Breast epithelium (tissue), 4 donors: ENCODE measurements at regions of chr6 and their contacts with region 1.

Region 1: DNA sequence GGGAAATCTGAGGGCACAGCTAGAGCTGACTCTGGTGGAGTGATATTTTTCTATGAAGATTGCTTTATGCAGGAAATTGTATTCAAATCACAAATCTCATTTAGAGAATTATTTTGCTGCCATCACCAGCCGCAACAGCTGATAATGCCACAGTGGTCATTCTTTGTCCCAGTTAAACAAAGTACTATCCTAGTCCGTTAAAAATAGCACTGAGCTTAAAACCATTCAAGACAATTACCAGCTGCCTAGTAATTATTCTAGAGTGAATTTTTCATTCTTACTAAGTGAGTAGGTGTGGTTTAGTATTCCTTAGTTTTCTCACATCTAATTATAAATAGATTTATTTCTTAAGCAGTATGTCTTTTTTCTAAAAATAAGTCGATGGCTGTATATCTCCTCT is 190.5 kb downstream of the SLC35F1 start:
- DNase-seq: no peak
- H3K4me3 ChIP-seq: no peak overlapping the region
- H3K27ac ChIP-seq: no peak overlapping the region
- H3K4me1 ChIP-seq: no peaks in the 10 kb centered on the region
- H3K27me3 ChIP-seq: no peaks in the 10 kb centered on the region
- CTCF ChIP-seq: no peak
- POLR2A ChIP-seq: no peak

Region 2: DNA sequence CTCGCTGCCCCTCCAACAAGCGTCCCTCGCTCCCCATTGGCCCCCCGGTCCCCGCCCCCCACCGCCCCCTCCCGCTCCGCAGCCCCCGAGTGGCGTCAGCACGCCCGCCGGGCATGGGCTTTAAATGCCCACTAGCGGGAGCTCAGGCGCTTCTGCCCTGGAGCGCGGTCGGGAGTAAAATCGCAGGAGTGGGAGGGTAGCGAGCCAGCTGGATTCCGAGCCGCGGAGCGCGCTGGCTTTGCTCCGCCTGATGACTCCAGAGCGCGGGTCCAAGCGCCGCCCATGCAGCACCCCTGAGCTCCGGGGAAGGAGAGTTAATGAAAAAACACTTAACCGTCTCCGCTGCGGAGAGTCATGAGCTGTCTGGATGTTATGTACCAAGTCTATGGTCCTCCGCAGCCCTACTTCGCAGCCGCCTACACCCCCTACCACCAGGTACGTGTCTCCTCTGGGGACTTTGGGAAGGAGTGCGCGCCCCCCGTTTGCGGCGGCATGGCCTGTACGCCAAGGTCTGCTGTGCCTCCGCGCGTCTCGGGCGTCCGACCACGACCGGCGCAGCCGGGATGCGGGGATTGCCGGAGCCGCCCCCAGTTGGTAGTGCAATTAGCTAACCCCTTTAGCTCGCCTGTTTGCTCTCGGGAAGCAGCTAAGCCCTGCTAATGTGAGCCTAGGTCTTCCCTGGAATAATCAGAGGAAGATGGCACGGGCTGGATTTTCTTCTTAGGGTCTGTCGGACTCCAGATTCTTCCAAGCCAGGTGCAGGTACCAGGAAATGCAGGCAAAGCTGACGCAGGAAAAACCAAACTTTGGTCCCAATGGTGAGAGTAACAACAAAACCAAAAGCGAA is 831.9 kb before region 1 on chr6 and contains the start of gene VGLL2:
- intact Hi-C with region 1: loop called (anchors 5 kb)
- DNase-seq: no peak
- H3K4me3 ChIP-seq: peak within 1 kb of the TSS; percentile 26 to 69 (median 45)
- H3K27ac ChIP-seq: no peak within 1 kb of the TSS
- H3K4me1 ChIP-seq: peaks cover 3 to 5% of the 10 kb centered on the region in 2 donors
- H3K27me3 ChIP-seq: peaks cover 0 to 94% of the 10 kb centered on the region in 2 donors
- CTCF ChIP-seq: no peak
- POLR2A ChIP-seq: no peak
- total RNA-seq, gene VGLL2: not detected

Region 3: DNA sequence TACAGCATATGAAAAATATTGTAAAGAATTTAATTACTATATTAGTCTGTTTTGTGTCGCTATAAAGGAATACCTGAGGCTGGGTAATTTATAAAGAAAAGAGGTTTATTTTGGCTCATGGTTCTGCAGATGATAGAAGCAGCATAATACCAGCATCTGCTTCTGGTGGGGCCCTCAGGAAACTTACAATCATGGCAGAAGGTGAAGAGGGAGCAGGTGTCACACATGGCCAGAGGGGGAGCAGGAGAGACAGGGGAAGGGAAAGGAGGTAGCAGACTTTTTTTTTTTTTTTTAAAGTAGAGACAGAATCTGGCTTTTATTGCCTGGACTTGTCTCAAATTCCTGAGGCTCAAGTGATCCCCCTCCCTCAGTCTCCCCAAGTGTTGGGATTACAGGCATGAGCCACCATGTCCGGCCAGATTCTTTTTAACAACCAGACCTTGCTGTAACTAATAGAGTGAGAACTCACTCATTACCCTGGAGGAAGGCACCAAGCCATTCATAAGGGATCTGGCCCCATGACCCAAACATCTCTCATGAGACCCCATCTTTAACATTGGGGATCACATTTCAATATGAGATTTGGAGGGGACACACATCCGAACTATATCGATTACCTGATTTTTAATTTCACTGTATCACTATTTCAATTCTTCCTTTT is 1187.4 kb after region 1 on chr6:
- intact Hi-C with region 1: no loop called
- DNase-seq: no peak
- H3K4me3 ChIP-seq: no peak overlapping the region
- H3K27ac ChIP-seq: no peak overlapping the region
- H3K4me1 ChIP-seq: no peaks in the 10 kb centered on the region
- H3K27me3 ChIP-seq: no peaks in the 10 kb centered on the region
- CTCF ChIP-seq: no peak
- POLR2A ChIP-seq: no peak